ENCODE measurements at regions of chr9 and their contacts with region 1.

Region 1: GRCh38 chr9:121322037-121322775 is 47.8 kb downstream of the STOM start:
- DNase-seq: no peak
- ATAC-seq: no peak
- H3K4me3 Mint-ChIP-seq: no peak overlapping the region
- H3K27ac Mint-ChIP-seq: peak overlapping the region; percentile 65
- H3K4me1 Mint-ChIP-seq: peaks cover 45% of the 10 kb centered on the region
- H3K27me3 Mint-ChIP-seq: no peaks in the 10 kb centered on the region

Region 2: DNA sequence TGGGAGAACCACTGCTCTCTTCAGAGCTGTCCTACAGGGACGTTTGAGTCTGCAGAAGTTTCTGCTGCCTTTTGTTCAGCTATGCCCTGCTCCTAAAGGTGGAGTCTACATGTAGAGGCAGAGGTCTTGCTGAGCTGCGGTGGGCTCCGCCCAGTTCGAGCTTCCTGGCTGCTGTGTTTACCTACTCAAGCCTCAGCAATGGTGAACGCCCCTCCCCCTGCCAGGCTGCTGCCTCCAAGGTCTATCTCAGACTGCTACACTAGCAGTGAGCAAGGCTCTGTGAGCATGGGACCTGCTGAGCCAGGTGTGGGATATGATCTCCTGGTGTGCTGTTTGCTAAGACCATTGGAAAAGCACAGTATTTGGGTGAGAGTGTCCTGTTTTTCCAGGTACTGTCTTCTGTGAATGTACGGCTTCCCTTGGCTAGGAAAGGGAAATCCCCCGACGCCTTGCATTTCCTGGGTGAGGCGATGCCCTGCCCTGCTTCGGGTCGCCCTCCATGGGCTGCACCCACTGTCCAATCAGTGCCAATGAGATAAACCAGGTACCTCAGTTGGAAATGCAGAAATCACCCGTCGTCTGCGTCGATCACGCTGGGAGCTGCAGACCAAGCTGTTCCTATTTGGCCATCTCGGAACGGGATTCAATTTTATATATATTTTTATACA is 188.9 kb before region 1 on chr9:
- CTCF ChIA-PET with region 1: no interaction called
- DNase-seq: peak; percentile 90
- ATAC-seq: peak; percentile 99
- H3K4me3 Mint-ChIP-seq: peak overlapping the region; percentile 15
- H3K27ac Mint-ChIP-seq: peak overlapping the region; percentile 67
- H3K4me1 Mint-ChIP-seq: peaks cover 48% of the 10 kb centered on the region
- H3K27me3 Mint-ChIP-seq: no peaks in the 10 kb centered on the region

Region 3: GRCh38 chr9:121213136-121213806 is 108.9 kb before region 1 on chr9:
- CTCF ChIA-PET with region 1: interaction called, 33 read pairs
- DNase-seq: peak; percentile 75
- ATAC-seq: peak; percentile 64
- H3K4me3 Mint-ChIP-seq: no peak overlapping the region
- H3K27ac Mint-ChIP-seq: no peak overlapping the region
- H3K4me1 Mint-ChIP-seq: peaks cover 20% of the 10 kb centered on the region
- H3K27me3 Mint-ChIP-seq: no peaks in the 10 kb centered on the region

Region 4: GRCh38 chr9:121299467-121300234 is 22.6 kb before region 1 on chr9:
- CTCF ChIA-PET with region 1: interaction called, 12 read pairs
- DNase-seq: no peak
- ATAC-seq: peak; percentile 71
- H3K4me3 Mint-ChIP-seq: peak overlapping the region; percentile 72
- H3K27ac Mint-ChIP-seq: no peak overlapping the region
- H3K4me1 Mint-ChIP-seq: peaks cover 15% of the 10 kb centered on the region
- H3K27me3 Mint-ChIP-seq: peaks cover 24% of the 10 kb centered on the region

Region 5: DNA sequence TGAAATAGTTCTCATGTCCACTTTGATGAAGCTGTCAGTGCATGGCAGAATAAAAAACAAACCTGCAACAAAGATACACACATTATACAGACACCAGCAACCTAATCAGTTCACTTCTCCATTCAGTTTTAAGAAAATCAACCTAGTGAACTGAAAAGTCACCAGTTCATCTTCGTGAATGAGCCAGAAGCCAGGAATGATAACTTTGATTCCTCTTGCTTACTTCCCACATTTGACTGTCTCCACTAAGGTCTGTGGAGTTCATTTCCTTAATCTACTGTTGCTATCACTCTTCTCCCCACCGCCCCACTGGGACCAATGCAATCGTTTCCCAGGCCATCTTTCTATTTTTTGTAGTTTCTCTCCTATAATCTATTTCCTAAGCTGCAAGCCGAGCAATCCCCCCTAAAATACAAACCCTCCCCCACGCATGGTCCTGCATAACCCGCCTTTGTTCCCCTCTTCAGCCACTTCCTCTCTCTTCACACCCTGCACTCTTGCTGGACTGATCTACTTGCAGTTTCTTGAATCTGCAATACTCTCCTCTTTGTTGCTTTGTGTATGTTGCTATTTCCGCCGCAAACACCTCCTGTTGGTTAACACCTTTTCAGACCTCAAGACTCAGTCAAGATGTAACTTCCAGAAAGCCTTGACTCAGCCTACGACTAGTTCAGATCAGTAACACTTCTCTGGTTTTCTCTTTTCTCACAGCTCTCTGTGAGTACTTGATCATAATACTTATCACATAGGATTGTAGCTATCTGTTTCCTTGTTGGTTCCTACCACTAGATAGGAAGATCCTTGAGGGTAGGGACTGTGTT is 31.2 kb after region 1 on chr9:
- CTCF ChIA-PET with region 1: interaction called, 49 read pairs
- DNase-seq: peak; percentile 92
- ATAC-seq: peak; percentile 90
- H3K4me3 Mint-ChIP-seq: peak overlapping the region; percentile 54
- H3K27ac Mint-ChIP-seq: peak overlapping the region; percentile 96
- H3K4me1 Mint-ChIP-seq: peaks cover 70% of the 10 kb centered on the region
- H3K27me3 Mint-ChIP-seq: no peaks in the 10 kb centered on the region

Region 6: DNA sequence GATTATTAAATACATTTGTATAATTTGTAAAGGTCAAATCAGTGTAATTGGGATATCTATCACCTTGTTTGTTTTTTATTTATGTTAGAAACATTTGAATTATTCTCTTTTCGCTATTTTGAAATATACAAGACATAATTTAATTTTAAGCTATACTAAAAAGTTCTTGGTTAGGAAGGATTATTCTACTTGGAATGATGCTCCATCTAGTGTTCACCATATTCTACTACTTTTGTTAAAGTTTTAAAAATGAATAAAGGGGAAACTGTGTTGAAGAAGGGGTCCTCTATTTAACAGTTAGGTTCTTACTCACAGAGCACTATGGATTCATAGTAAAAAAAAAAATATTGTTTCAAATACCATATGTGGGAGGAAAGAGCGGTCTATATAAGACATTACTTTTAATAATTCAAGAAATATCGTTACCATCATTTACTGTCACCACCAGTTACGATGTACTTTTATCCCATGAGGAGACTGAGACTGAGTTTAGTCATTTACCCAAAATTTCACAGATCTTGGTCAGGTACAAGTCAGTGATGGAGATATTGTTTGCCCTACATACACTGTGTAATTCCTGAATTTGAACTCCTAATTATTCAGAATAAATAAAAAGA is 54.1 kb after region 1 on chr9:
- CTCF ChIA-PET with region 1: interaction called, 221 read pairs
- DNase-seq: no peak
- ATAC-seq: no peak
- H3K4me3 Mint-ChIP-seq: no peak overlapping the region
- H3K27ac Mint-ChIP-seq: no peak overlapping the region
- H3K4me1 Mint-ChIP-seq: peaks cover 21% of the 10 kb centered on the region
- H3K27me3 Mint-ChIP-seq: peaks cover 3% of the 10 kb centered on the region

Region 7: GRCh38 chr9:121411993-121412392 is 89.8 kb after region 1 on chr9:
- CTCF ChIA-PET with region 1: interaction called, 14 read pairs
- DNase-seq: no peak
- ATAC-seq: no peak
- H3K4me3 Mint-ChIP-seq: no peak overlapping the region
- H3K27ac Mint-ChIP-seq: no peak overlapping the region
- H3K4me1 Mint-ChIP-seq: no peaks in the 10 kb centered on the region
- H3K27me3 Mint-ChIP-seq: peaks cover 11% of the 10 kb centered on the region

Region 8: DNA sequence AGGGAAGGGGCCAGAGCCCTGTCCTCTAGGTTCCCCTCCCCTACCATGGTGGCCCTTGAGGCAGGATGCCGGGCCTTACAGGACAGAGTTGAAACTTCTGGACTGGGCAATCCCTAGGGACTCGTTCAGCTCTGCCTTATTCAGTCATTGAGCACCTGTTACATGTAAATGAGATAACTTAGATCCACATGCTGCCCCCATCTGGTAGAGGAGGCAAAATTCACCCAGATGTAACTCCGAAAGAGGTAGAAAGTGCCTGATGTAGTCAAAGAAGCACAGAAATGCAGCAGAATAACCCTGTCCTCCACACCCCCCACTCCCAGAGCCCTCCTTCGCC is 175.9 kb after region 1 on chr9:
- CTCF ChIA-PET with region 1: interaction called, 10 read pairs
- DNase-seq: peak; percentile 74
- ATAC-seq: peak; percentile 71
- H3K4me3 Mint-ChIP-seq: peak overlapping the region; percentile 59
- H3K27ac Mint-ChIP-seq: no peak overlapping the region
- H3K4me1 Mint-ChIP-seq: peaks cover 19% of the 10 kb centered on the region
- H3K27me3 Mint-ChIP-seq: peaks cover 73% of the 10 kb centered on the region

Region 9: DNA sequence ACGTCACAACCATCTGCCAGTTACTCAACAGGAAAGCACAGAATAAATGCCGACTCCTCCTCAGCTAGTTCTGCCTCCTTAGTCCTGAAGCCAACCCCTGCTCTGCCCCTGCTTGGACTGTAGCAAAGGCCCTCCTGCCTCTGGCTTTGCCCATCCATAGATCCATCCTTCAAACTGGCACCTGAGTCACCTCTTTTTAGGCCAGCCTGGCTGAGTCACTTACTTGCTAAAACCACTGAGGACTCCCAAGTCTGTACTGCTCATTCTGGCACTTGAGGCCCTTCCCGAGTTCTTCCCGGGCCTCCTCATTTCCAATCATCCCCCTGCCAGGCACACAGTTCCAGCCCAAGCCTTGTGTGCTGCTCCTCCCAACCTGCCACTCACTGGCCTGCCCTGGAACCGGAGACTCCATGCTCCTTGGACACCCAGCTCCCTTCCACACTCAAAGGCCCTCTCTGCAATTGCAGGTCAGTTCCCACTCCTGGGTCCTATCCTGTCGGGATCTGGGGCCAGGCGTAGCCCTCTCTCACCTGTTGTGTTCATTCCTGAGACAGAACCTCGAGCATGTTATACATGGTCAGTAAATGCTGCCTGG is 549.3 kb after region 1 on chr9:
- CTCF ChIA-PET with region 1: no interaction called
- DNase-seq: peak; percentile 28
- ATAC-seq: no peak
- H3K4me3 Mint-ChIP-seq: no peak overlapping the region
- H3K27ac Mint-ChIP-seq: no peak overlapping the region
- H3K4me1 Mint-ChIP-seq: no peaks in the 10 kb centered on the region
- H3K27me3 Mint-ChIP-seq: no peaks in the 10 kb centered on the region

Measured in activated CD8-positive, alpha-beta memory T cell treated with anti-CD3 and anti-CD28 coated beads, Interleukin-2, amount 10 ng/mL, durations not matched to agents 7 days and 5 days (primary cell).